Esophagus muscularis mucosa (tissue), 4 donors: ENCODE measurements at regions of chr17 and their contacts with region 1.

Region 1: DNA sequence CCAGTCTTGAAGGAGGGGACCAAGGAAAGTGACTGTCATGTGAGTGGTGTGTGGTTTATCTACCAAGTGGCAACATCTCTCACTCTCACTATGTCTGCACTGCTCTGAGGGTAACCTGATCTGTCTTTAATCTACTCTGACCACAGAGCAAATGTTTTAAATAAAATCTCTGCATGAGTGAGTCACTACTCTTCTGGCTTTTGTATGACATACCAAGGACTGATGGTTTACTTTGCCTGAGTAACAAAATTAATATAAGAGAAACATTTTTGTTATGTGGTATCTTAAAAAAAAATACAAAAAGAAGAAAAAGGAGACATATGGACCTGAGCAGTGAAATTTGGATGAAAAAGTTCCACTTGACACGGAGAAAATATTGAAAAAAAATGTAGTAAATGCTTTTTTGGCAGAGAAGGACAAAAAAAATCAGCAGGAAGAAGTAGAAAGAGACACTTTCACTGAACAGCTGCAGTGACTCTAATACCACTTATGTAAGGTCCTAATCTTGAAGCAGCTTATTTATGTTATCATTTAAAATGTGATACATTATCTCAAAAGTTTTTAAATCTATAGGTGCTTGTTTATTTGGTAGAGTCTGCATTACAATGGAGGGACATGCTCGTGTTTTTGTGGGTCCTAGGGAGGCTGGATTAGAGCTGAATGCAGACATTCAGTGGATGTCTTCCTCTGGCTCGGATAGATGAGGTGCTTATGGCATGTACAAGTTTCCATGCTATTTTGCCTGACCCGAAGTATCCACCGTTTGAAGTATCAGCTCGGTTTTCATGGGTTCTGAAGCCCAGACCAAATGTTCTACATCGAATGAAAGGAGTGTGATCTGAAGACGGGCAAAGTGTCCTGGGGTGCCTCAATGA is 240.7 kb downstream of the MAP2K6 start:
- DNase-seq: no peak
- H3K4me3 ChIP-seq: no peak overlapping the region
- H3K27ac ChIP-seq: peak overlapping the region; percentile 25 to 57 (median 36)
- H3K4me1 ChIP-seq: peaks cover 0 to 18% (median 14%) of the 10 kb centered on the region in 4 donors
- H3K27me3 ChIP-seq: no peaks in the 10 kb centered on the region
- CTCF ChIP-seq: no peak
- EP300 ChIP-seq: no peak
- POLR2A ChIP-seq: no peak

Region 2: DNA sequence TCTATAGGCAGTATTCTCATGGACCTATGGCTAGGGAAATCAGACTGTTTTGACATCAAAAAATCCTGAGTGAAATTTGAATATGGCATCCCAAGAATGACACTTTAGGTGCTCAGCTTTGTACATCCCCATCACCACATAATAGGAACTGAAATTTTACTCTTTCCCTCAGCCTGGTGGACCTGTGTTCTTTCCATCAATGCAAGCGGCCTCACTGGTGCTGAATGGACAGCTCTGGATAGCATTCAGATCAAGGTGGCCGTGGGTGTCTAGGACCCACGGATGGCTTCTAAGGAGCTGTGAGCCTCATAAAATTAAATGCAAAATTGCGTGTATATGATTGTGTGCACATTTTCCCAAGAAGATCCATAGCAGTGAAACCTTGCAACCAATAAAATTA is 88.1 kb before region 1 on chr17:
- intact Hi-C with region 1: loop called (anchors 10 kb)
- DNase-seq: no peak
- H3K4me3 ChIP-seq: no peak overlapping the region
- H3K27ac ChIP-seq: no peak overlapping the region
- H3K4me1 ChIP-seq: peaks cover 0 to 13% (median 5%) of the 10 kb centered on the region in 4 donors
- H3K27me3 ChIP-seq: no peaks in the 10 kb centered on the region
- CTCF ChIP-seq: no peak
- EP300 ChIP-seq: no peak
- POLR2A ChIP-seq: no peak

Region 3: DNA sequence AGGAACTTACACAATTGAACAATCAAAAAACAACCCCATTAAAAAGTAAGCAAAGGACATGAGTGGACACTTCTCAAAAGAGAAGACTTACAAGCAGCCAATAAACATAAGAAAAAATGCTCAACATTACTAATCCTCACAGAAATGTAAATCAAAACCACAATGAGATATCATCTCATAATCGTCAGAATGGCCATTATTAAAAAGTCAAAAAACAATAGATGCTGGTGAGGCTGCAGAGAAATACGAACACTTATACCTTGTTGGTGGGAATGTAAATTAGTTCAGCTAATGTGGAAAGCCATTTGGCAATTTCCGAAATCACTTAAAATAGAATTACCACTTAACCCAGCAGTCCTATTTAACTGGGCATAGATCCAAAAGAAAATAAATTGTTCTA is 117.9 kb after region 1 on chr17:
- intact Hi-C with region 1: no loop called
- DNase-seq: no peak
- H3K4me3 ChIP-seq: no peak overlapping the region
- H3K27ac ChIP-seq: no peak overlapping the region
- H3K4me1 ChIP-seq: no peaks in the 10 kb centered on the region
- H3K27me3 ChIP-seq: no peaks in the 10 kb centered on the region
- CTCF ChIP-seq: no peak
- EP300 ChIP-seq: no peak
- POLR2A ChIP-seq: no peak